Activated CD4-positive, alpha-beta memory T cell treated with anti-CD3 and anti-CD28 coated beads, Interleukin-2, amount 10 ng/mL, durations not matched to agents 7 days and 5 days (primary cell): ENCODE measurements at regions of chr16 and their contacts with region 1.

Region 1: DNA sequence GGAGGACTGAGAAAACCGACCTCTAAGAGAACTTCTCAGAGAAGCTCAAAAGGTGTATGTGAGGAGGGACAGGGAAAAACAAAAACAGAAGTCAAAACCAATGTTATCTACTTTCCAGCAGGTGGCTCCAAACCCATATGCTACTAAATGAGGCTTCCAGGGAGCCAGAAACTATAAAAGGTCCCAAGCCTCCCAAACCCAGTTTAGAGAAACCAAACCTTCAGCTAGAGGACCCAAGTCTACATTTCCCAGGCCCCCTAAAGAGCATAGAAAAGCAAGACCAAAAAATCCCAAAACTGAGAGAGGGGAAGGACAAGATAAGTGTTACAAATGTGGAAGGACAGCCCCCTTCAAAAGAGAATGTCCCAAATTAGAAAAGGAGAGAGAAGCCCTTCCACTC is 3.7 kb downstream of the HPR start:
- DNase-seq: no peak
- H3K4me3 Mint-ChIP-seq: no peak overlapping the region
- H3K27ac Mint-ChIP-seq: no peak overlapping the region
- H3K4me1 Mint-ChIP-seq: no peaks in the 10 kb centered on the region
- H3K27me3 Mint-ChIP-seq: no peaks in the 10 kb centered on the region

Region 2: GRCh38 chr16:72093448-72094265 is 26.9 kb after region 1 on chr16 and contains the starts of genes DHX38 and TXNL4B:
- CTCF ChIA-PET with region 1: interaction called, 12 read pairs
- POLR2A ChIA-PET with region 1: no interaction called
- DNase-seq: peak; percentile 95
- H3K4me3 Mint-ChIP-seq: peak within 1 kb of the TSS; percentile 96
- H3K27ac Mint-ChIP-seq: peak within 1 kb of the TSS; percentile 95
- H3K4me1 Mint-ChIP-seq: peaks cover 43% of the 10 kb centered on the region
- H3K27me3 Mint-ChIP-seq: no peaks in the 10 kb centered on the region
- total RNA-seq, gene DHX38: 70.2 to 70.7 TPM
- total RNA-seq, gene TXNL4B: 15.3 to 16.2 TPM

Region 3: GRCh38 chr16:72099377-72099818 is 32.7 kb after region 1 on chr16:
- CTCF ChIA-PET with region 1: interaction called, 12 read pairs
- POLR2A ChIA-PET with region 1: no interaction called
- DNase-seq: peak; percentile 54
- H3K4me3 Mint-ChIP-seq: no peak overlapping the region
- H3K27ac Mint-ChIP-seq: no peak overlapping the region
- H3K4me1 Mint-ChIP-seq: peaks cover 16% of the 10 kb centered on the region
- H3K27me3 Mint-ChIP-seq: no peaks in the 10 kb centered on the region